MCF 10A (cell line): ENCODE measurements at regions of chr2 and their contacts with region 1.

Region 1: DNA sequence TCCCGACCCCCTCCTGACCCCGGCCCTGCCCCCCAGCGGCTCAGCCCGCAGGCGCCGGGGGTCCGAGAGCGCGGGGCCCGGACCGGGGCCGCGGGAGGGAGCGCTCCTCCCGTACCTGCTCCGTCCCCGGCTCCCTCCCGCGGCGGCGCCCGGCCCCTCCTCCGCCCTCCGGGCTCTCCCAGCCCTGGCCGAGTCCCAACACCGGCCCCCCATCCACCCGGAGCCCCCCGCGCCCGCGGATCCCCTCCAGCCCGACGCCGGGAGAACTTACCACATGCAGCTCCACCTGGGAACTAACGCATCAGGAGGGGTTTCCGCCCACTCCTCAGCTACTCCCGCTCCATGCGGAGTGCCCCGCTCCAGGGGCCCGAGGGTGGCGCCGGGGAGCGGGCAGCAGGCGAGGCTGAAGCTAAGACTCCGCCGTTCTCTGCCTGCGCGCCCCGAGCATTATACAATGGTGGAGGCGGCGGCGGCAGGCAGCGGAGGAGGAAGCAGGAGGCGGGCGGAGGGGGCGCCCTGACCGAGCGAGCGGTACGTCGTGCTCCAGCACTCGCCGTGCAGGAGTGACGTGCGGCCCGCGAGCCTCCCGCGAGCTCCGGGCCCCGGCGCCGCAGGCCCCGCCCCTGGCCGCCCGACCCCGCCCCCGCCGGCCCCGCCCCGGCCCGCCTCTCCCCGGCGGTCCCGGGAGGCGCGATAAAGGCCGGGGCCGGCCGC is at the start of gene SERTAD2:
- DNase-seq: peak; percentile 86
- H3K4me3 Mint-ChIP-seq: peak within 1 kb of the TSS; percentile 77
- H3K27ac Mint-ChIP-seq: peak within 1 kb of the TSS; percentile 89
- H3K4me1 Mint-ChIP-seq: peaks cover 22% of the 10 kb centered on the region
- H3K27me3 Mint-ChIP-seq: no peaks in the 10 kb centered on the region
- CTCF ChIP-seq: no peak
- total RNA-seq, gene SERTAD2: 15.0 and 21.6 TPM in 2 replicates

Region 2: GRCh38 chr2:64586883-64587481 is 66.5 kb before region 1 on chr2:
- CTCF ChIA-PET with region 1: interaction called, 5 read pairs
- POLR2A ChIA-PET with region 1: interaction called, 21 read pairs
- intact Hi-C with region 1: no loop called
- DNase-seq: peak; percentile 59
- H3K4me3 Mint-ChIP-seq: no peak overlapping the region
- H3K27ac Mint-ChIP-seq: peak overlapping the region; percentile 57
- H3K4me1 Mint-ChIP-seq: no peaks in the 10 kb centered on the region
- H3K27me3 Mint-ChIP-seq: no peaks in the 10 kb centered on the region
- CTCF ChIP-seq: peak; percentile 67

Region 3: GRCh38 chr2:64675860-64676259 is 22.4 kb after region 1 on chr2:
- CTCF ChIA-PET with region 1: interaction called, 8 read pairs
- POLR2A ChIA-PET with region 1: interaction called, 14 read pairs
- intact Hi-C with region 1: no loop called
- DNase-seq: peak; percentile 56
- H3K4me3 Mint-ChIP-seq: no peak overlapping the region
- H3K27ac Mint-ChIP-seq: no peak overlapping the region
- H3K4me1 Mint-ChIP-seq: peaks cover 5% of the 10 kb centered on the region
- H3K27me3 Mint-ChIP-seq: no peaks in the 10 kb centered on the region
- CTCF ChIP-seq: no peak

Region 4: GRCh38 chr2:64730551-64731262 is 77.2 kb after region 1 on chr2:
- CTCF ChIA-PET with region 1: interaction called, 7 read pairs
- POLR2A ChIA-PET with region 1: interaction called, 66 read pairs
- intact Hi-C with region 1: no loop called
- DNase-seq: peak; percentile 81
- H3K4me3 Mint-ChIP-seq: peak overlapping the region; percentile 63
- H3K27ac Mint-ChIP-seq: peak overlapping the region; percentile 91
- H3K4me1 Mint-ChIP-seq: peaks cover 24% of the 10 kb centered on the region
- H3K27me3 Mint-ChIP-seq: no peaks in the 10 kb centered on the region
- CTCF ChIP-seq: no peak

Region 5: DNA sequence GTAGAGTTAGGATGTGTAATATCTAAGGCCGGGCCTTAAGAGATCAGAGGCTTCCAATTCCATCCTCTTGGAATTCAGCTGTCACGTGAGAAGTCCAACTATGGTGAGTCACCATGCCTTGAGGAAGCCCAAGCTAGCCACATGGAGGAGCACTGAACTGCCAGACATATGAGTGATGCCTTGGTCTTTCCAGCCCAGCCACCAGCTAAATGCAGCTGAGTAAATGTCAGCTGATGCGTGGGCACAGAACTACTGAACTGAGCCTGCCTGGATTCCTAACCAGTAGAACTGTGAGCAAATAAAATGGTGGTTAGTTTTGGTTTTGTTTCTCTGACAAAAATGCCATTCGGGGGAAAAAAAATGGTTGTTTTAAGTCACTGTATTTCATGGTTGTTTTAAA is 153.9 kb after region 1 on chr2:
- CTCF ChIA-PET with region 1: no interaction called
- POLR2A ChIA-PET with region 1: interaction called, 12 read pairs
- intact Hi-C with region 1: no loop called
- DNase-seq: peak; percentile 97
- H3K4me3 Mint-ChIP-seq: peak overlapping the region; percentile 34
- H3K27ac Mint-ChIP-seq: peak overlapping the region; percentile 71
- H3K4me1 Mint-ChIP-seq: peaks cover 17% of the 10 kb centered on the region
- H3K27me3 Mint-ChIP-seq: no peaks in the 10 kb centered on the region
- CTCF ChIP-seq: no peak

Region 6: DNA sequence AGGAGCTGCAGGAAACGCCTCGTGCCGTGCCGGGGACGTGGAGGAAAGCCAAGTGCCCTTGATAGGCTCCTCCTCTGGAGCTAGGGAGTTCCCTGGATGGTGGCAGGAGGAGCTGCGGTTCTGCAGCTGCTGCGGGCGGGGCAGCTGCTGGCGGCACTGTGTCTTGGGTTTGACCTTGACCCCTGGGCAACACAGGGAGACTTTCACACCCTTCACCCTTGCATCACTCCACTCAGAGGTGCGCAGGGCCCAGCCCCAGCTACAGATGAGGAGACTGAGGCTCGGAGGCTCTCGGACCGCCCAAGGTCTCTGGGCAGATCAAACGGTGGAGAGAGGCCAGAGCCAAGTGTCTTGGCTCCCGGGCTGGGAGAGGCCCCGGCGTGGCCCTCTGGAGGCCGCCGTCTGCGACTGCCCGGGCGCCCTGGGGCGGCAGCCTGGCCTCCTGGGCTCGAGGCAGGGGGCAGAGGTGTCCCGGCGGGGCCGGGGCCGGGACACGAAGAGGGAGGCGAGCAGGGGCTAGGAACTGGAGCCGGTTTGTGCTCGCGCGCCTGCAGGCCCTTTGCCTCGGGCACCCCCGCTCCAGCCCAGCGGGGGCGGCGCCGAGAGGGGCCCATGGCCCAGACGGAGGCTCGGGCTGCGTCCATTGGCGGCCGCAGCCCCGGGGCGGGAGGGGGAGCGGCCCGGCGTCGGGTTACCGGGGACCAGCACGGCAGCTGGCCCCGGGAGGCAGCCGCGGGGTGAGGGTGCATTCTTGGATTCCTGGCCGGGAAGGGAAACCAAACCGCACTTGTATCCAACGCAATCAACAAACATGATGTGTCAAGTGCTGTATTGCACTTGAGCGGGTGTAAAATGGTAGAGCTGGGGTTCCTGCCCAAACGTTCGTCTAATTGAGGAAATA is 206.1 kb after region 1 on chr2:
- CTCF ChIA-PET with region 1: interaction called, 18 read pairs
- POLR2A ChIA-PET with region 1: interaction called, 178 read pairs
- intact Hi-C with region 1: loop called (anchors 1 kb)
- DNase-seq: peak; percentile 96
- H3K4me3 Mint-ChIP-seq: no peak overlapping the region
- H3K27ac Mint-ChIP-seq: no peak overlapping the region
- H3K4me1 Mint-ChIP-seq: peaks cover 11% of the 10 kb centered on the region
- H3K27me3 Mint-ChIP-seq: no peaks in the 10 kb centered on the region
- CTCF ChIP-seq: peak; percentile 15

Region 7: DNA sequence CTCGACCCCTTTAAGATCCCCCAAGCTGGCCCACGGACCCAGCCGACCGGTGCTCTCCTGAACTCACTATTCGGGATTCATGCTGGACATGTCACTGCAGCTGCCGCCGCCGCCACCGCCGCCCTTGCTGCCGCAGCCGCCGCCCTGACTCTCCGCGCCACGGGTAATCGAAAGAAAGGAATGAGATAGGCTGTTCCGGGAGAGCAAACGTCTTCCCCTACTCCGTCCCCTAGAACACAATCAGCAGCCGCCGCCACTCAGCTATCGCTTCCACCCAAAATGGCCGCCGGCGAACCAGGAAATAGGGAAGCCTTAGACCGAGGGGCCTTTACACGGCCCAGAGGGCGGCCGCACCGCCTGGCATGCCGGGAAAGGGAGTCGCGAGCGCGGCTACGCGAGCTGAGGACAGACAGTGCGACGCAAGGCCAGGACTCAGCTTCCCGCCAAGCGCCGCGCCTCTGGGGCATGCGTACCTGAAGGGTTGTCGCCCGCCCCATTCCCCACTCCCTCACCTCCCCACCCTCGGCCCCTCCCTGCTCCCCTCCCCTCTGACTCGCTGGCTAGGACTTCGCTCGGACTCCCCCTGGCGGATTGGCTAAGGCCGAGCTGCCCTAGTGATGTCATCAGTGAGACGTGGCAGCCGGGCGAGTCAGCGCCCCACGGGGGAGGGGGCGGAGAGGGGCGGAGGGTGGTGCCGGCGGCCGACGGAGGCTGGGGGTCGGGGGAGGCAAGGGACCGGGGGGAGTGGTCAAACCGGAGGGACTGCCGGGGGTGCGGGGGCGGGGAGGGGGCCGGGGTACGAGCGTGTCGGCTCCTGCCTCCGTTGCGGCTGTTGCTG is 476.5 kb after region 1 on chr2 and contains the start of gene RAB1A:
- CTCF ChIA-PET with region 1: no interaction called
- POLR2A ChIA-PET with region 1: interaction called, 10 read pairs
- intact Hi-C with region 1: no loop called
- DNase-seq: peak; percentile 99
- H3K4me3 Mint-ChIP-seq: peak within 1 kb of the TSS; percentile 84
- H3K27ac Mint-ChIP-seq: peak within 1 kb of the TSS; percentile 97
- H3K4me1 Mint-ChIP-seq: peaks cover 10% of the 10 kb centered on the region
- H3K27me3 Mint-ChIP-seq: no peaks in the 10 kb centered on the region
- CTCF ChIP-seq: peak; percentile 31
- total RNA-seq, gene RAB1A: 128 and 131 TPM in 2 replicates